Gastrocnemius medialis (tissue), 4 donors: ENCODE measurements at regions of chr1 and their contacts with region 1.

Region 1: DNA sequence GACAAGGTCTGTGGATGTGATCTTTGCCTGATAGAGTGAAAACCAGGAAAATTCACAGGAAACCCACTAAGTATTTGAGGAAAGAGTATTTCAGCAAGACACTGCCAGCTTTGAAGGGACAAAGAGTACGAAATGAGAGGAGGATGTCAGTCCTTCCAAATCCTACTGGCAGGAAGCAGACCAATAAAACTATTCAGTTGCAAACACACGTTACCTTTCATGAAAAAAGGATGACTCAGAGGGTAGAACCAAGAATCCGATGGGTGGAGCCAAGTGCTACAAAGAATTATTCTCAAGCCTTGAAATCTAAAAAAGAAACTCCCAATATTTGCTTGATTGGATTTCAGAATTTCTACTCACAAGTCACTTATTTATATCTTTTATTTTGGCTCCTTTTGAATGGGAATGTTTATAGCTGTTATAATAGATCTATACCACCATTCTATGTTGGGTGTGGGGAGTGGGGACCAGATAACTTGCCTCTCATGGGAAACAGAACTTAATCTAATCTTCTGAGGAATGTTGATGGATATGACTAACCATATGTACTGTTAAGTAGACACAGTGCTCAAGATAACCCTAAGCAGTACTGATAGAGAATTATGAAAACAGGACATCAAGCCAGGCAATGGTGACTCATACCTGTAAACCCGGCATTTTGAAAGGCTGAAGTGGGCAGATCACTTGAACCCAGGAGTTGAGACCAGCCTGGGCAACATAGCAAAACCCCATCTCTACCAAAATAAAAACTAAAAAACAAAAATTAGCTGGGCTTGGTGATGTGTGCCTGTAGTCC is 19.3 kb upstream of the HEATR1 start:
- DNase-seq: no peak
- ATAC-seq: peak in 1 of 2 donors; percentile 34
- H3K4me3 ChIP-seq: no peak overlapping the region
- H3K27ac ChIP-seq: peak overlapping the region; percentile 83 to 91 (median 86)
- H3K4me1 ChIP-seq: peaks cover 20 to 40% of the 10 kb centered on the region in 2 donors
- H3K27me3 ChIP-seq: no peaks in the 10 kb centered on the region
- CTCF ChIP-seq: no peak
- POLR2A ChIP-seq: no peak

Region 2: GRCh38 chr1:236702791-236703394 is 79.3 kb after region 1 on chr1:
- in situ Hi-C with region 1: no loop called
- intact Hi-C with region 1: loop called (anchors 5 kb)
- DNase-seq: no peak
- ATAC-seq: peak in 1 of 2 donors; percentile 2
- H3K4me3 ChIP-seq: peak overlapping the region in 2 of 4 donors; percentile 8 to 16
- H3K27ac ChIP-seq: peak overlapping the region; percentile 96 to 97 (median 96)
- H3K4me1 ChIP-seq: peaks cover 85 to 90% of the 10 kb centered on the region in 2 donors
- H3K27me3 ChIP-seq: no peaks in the 10 kb centered on the region
- CTCF ChIP-seq: no peak
- POLR2A ChIP-seq: no peak